Activated CD4-positive, alpha-beta T cell treated with anti-CD3 and anti-CD28 coated beads for 36 hours (primary cell): ENCODE measurements at regions of chr2 and their contacts with region 1.

Region 1: GRCh38 chr2:221573430-221574230 is 1.5 kb upstream of the EPHA4 start:
- DNase-seq: peak; percentile 88
- ATAC-seq: peak; percentile 49
- H3K4me3 Mint-ChIP-seq: peak overlapping the region; percentile 79
- H3K27ac Mint-ChIP-seq: peak overlapping the region; percentile 71
- H3K4me1 Mint-ChIP-seq: peaks cover 28% of the 10 kb centered on the region
- H3K27me3 Mint-ChIP-seq: peaks cover 43% of the 10 kb centered on the region

Region 2: DNA sequence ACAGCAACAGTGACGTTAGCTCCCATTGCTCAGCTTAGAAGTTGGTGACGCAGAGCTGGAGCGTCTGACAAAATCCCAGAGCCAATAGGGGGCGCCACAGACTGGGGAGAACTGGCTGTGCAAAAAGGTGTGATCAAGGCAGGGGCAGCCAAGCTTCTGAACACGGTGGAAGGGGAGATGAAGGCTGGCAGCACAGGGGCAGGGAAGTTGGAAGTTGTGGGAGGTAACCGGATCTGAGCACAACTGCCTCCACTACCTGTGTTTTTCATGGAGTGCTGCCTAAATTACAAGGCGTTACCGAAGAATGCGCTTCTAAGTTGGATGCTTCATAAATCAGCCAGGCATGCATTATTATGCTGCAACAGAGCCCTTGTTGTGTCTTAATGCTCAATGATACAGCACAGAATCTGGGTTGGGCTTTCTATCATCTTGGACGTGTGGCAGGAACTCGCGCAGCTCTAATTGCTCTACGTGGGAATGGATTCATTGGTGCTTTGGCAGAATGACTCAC is 1576.2 kb before region 1 on chr2:
- CTCF ChIA-PET with region 1: no interaction called
- POLR2A ChIA-PET with region 1: no interaction called
- intact Hi-C with region 1: loop called in 1 of 2 experiments (anchors 2 kb)
- DNase-seq: peak; percentile 57
- ATAC-seq: no peak
- H3K4me3 Mint-ChIP-seq: no peak overlapping the region
- H3K27ac Mint-ChIP-seq: no peak overlapping the region
- H3K4me1 Mint-ChIP-seq: no peaks in the 10 kb centered on the region
- H3K27me3 Mint-ChIP-seq: no peaks in the 10 kb centered on the region

Region 3: GRCh38 chr2:220687231-220687843 is 886.3 kb before region 1 on chr2:
- CTCF ChIA-PET with region 1: interaction called, 11 read pairs
- POLR2A ChIA-PET with region 1: no interaction called
- intact Hi-C with region 1: loop called (anchors 1 kb)
- DNase-seq: peak; percentile 79
- ATAC-seq: peak; percentile 72
- H3K4me3 Mint-ChIP-seq: no peak overlapping the region
- H3K27ac Mint-ChIP-seq: no peak overlapping the region
- H3K4me1 Mint-ChIP-seq: no peaks in the 10 kb centered on the region
- H3K27me3 Mint-ChIP-seq: peaks cover 21% of the 10 kb centered on the region

Region 4: DNA sequence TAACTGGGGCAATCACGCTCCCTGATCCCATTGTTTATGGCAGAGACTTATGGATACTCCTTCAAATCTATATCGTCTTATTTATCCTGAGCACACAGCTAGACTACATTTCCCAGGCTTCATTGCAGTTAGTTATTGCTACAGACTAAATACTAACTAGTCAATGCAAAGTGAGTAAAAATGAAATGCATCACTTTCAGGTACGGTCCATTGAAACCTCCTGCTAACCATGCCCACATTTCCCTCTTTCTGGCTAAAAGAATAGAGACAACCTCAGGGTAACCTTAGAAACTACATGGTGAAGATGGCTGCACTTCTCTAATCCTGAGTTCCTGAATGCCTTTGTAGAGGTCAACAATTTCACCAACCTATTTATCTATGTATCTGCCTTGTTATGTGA is 438.9 kb before region 1 on chr2:
- CTCF ChIA-PET with region 1: no interaction called
- POLR2A ChIA-PET with region 1: no interaction called
- intact Hi-C with region 1: loop called in 1 of 2 experiments (anchors 5 kb)
- DNase-seq: no peak
- ATAC-seq: no peak
- H3K4me3 Mint-ChIP-seq: no peak overlapping the region
- H3K27ac Mint-ChIP-seq: no peak overlapping the region
- H3K4me1 Mint-ChIP-seq: no peaks in the 10 kb centered on the region
- H3K27me3 Mint-ChIP-seq: no peaks in the 10 kb centered on the region

Region 5: DNA sequence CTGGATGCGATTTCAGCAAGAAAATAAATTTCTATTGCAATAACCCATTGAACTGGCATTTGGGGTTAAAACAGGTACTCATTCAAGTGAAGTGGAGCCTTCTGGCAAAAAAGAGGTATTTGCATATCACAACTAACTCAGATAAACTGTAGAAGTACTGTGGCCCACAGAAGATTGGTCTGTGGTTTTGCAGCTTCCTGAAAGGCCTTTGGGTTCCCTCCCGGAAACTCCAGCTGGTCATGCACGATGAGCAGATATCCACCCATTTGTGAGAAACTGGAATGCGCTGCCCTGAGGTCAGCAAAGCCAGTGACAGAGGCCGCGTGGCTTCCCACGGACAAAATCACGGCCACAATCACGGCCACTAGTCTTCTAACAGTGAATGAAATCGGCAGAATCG is 107.9 kb before region 1 on chr2:
- CTCF ChIA-PET with region 1: no interaction called
- POLR2A ChIA-PET with region 1: no interaction called
- intact Hi-C with region 1: loop called in 1 of 2 experiments (anchors 5 kb)
- DNase-seq: peak; percentile 9
- ATAC-seq: no peak
- H3K4me3 Mint-ChIP-seq: no peak overlapping the region
- H3K27ac Mint-ChIP-seq: no peak overlapping the region
- H3K4me1 Mint-ChIP-seq: peaks cover 43% of the 10 kb centered on the region
- H3K27me3 Mint-ChIP-seq: no peaks in the 10 kb centered on the region

Region 6: DNA sequence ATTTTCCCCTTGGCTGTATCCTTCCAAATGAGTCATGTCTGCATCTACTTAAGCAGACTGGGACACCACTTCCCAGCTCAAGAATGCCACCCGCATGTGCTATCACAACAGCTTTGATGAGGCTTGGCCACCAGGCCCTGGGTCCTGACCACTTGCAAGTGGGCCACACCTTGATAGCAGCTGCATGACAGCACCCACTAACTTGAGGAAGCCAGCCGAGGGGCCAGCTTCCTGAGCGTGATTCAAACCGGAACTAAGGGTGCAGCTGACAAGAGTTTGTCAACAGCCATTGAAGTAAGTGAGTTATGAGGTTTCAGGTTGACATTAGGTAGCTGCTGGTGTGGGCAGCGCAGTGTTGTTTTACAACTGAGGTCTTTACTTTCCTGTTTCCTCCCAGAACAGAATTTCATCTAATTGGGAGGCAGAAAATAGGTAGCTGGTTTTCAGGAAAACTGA is 55.9 kb before region 1 on chr2:
- CTCF ChIA-PET with region 1: no interaction called
- POLR2A ChIA-PET with region 1: no interaction called
- intact Hi-C with region 1: loop called (anchors 1 kb)
- DNase-seq: peak; percentile 84
- ATAC-seq: peak; percentile 86
- H3K4me3 Mint-ChIP-seq: no peak overlapping the region
- H3K27ac Mint-ChIP-seq: no peak overlapping the region
- H3K4me1 Mint-ChIP-seq: peaks cover 13% of the 10 kb centered on the region
- H3K27me3 Mint-ChIP-seq: no peaks in the 10 kb centered on the region

Region 7: GRCh38 chr2:222655787-222656525 is 1082.3 kb after region 1 on chr2 and contains the start of gene FARSB:
- CTCF ChIA-PET with region 1: no interaction called
- POLR2A ChIA-PET with region 1: no interaction called
- intact Hi-C with region 1: loop called in 1 of 2 experiments (anchors 10 kb)
- DNase-seq: peak; percentile 96
- ATAC-seq: peak; percentile 92
- H3K4me3 Mint-ChIP-seq: peak within 1 kb of the TSS; percentile 97
- H3K27ac Mint-ChIP-seq: peak within 1 kb of the TSS; percentile 95
- H3K4me1 Mint-ChIP-seq: peaks cover 38% of the 10 kb centered on the region
- H3K27me3 Mint-ChIP-seq: no peaks in the 10 kb centered on the region
- total RNA-seq, gene FARSB: 56.3 to 58.5 TPM